ENCODE measurements at regions of chr11 and their contacts with region 1.

Region 1: DNA sequence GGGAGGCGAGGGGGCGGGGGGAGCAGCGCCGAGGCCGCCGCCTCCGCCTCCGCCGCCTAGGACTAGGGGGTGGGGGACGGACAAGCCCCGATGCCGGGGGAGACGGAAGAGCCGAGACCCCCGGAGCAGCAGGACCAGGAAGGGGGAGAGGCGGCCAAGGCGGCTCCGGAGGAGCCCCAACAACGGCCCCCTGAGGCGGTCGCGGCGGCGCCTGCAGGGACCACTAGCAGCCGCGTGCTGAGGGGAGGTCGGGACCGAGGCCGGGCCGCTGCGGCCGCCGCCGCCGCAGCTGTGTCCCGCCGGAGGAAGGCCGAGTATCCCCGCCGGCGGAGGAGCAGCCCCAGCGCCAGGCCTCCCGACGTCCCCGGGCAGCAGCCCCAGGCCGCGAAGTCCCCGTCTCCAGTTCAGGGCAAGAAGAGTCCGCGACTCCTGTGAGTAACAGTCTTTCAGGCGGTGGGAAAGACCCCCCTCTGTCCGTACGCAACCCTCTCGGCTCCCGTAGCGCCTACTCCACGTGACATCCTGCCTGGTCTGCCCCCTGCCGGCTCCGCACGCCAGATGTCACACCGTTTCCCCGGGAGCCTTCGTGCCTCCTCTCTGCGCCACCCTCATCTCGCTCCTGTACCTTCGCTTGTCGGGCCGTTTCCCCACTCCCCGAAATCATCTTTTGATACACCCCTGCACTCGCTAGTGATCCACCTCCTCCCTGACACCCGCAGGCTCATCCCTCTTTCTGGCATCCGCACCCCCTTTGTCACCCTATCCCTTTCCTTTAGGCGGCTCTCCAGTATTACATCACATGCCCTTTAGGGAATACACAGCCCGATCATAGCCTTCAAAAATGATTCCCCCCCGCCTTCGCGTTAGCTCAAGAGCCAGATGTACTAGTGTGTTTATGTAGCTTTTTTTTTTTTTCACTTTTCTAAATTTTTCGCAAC is 598 bp downstream of the ZFP91 start:
- DNase-seq: peak; percentile 77 to 96
- H3K4me3 ChIP-seq: peak overlapping the region; percentile 94 to 97
- H3K27ac ChIP-seq: peak overlapping the region; percentile 98 to 99
- H3K4me1 ChIP-seq: peaks cover 0 to 32% of the 10 kb centered on the region in 2 donors
- H3K27me3 ChIP-seq: no peaks in the 10 kb centered on the region
- CTCF ChIP-seq: peak; percentile 65 to 94 (median 73)

Region 2: DNA sequence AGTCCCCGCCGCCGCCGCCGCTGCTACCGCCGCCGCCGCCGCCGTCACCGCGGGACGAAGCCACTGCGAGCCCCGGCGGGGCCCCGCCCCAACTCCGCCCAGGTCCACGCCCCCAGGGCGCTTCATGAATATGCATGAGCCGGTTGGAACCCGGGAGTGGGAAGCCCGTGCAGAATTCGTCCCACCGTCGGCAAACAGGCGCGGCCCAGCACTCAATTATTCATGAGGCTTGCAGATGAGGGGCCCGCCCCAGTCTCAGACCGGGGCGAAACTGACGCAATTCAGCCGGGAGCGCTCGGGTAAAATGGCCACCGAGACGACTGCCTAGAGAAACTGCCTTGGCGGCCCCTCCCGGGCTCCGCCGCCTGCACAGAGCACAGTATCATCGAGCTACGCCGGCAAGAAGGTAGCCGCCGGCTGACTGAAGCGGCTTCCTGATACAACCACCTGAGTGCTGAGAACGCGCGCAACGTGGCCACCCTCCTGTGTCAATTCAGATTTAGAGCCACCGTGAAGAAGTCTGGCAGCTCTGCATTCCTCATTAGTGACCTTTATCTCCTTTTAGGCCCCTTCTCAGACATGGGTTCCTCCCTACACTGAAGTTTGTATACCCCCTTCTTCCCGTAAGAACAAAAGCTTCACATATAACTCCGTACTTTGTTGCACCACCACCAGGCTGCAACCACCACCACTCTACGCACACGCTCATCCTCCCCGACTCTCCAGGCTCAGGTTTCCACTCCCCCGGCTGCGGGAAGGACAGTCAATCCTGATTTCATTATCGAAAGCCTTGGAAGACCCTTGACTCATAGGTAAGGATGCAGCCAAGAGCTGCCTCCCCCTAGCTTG is 1254.4 kb before region 1 on chr11 and contains the start of gene TNKS1BP1:
- intact Hi-C with region 1: loop called (anchors 1 kb)
- DNase-seq: peak; percentile 97 to 99
- H3K4me3 ChIP-seq: peak within 1 kb of the TSS; percentile 90 to 94
- H3K27ac ChIP-seq: peak within 1 kb of the TSS; percentile 94 to 98
- H3K4me1 ChIP-seq: peaks cover 8 to 28% of the 10 kb centered on the region in 2 donors
- H3K27me3 ChIP-seq: no peaks in the 10 kb centered on the region
- CTCF ChIP-seq: no peak
- total RNA-seq, gene TNKS1BP1: 131 TPM

Region 3: DNA sequence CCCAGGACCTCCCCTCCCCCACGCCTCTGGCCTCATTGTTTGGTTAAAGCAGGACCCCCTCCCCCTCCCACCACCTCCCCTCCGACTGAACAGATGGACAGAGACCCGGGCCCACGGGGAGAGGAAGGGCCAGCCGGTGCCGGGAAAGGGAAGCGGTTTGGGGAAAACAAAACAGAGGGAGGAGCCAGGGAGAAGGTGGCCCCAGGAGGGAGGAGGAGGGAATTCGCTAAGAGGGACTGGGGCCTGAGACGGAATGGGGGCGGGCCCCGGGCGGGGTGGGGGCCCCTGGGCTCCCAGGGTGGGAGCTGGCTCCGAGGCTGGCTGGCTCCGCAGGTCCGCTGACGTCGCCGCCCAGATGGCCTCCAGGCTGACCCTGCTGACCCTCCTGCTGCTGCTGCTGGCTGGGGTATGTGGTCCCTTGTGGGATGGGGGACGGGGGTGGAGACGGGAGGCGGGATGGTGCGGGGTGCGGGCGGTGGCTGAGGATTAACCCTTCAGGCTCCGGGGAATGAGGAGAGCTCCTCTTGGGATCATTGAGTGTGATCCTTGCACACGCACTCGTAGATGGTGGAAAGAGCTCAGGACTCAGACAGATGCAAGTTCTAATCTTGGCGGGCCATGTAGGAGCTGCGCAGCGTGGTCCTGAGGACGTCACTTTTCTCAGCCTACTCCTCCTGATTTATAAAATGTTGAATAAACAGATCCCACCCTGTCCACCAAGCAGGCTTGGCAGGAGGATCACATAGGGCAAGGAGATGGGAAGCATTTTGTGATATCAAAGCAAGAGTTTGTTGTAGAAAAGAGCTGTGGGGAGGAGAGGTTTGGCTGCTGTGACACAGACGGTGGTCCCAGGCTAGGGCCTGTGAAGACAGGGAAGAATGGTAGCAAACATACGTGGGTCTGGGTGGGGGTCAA is 981.3 kb before region 1 on chr11:
- intact Hi-C with region 1: loop called (anchors 5 kb)
- DNase-seq: peak; percentile 42 to 89
- H3K4me3 ChIP-seq: peak overlapping the region; percentile 72
- H3K27ac ChIP-seq: peak overlapping the region; percentile 95 to 97
- H3K4me1 ChIP-seq: peaks cover 0 to 9% of the 10 kb centered on the region in 2 donors
- H3K27me3 ChIP-seq: no peaks in the 10 kb centered on the region
- CTCF ChIP-seq: no peak

Region 4: DNA sequence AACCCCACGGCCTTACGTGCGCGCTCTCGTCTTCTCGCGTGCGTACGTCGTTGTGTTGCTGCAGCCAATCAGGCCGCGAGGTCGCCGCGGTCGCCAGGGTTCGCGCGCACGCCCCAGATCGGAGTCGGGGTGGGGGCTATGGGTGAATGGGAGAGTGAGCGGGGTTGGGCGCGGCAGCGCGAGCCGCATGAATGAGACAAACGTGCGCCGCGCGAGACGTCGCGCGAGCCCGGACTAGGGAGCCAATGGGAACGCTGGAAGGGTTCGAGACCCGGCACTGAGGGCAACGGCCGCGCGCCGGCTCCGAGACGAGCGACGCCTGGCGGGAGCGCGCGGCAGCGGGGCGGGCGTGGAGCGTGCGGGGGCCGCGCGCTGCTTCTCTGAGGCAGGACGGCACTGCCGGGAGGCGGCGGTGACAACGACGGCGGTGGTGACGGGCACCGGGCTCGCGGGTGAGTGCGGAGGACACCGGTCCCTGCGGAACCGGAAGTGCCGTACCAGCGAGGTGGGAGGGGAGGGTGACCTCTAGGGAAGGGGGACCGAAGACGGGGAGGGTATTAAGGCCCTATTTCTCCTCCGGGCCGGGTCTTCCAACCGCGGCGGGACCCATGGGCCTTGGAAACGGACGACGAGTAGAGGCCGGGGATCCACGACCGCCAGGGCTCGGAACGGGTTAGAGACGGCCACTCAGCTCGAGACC is 911.6 kb before region 1 on chr11 and contains the start of gene ZDHHC5:
- intact Hi-C with region 1: loop called (anchors 1 kb)
- DNase-seq: peak; percentile 98 to 100
- H3K4me3 ChIP-seq: peak within 1 kb of the TSS; percentile 90 to 96
- H3K27ac ChIP-seq: peak within 1 kb of the TSS; percentile 98
- H3K4me1 ChIP-seq: peaks cover 6 to 16% of the 10 kb centered on the region in 2 donors
- H3K27me3 ChIP-seq: no peaks in the 10 kb centered on the region
- CTCF ChIP-seq: peak; percentile 33 to 69 (median 34)
- total RNA-seq, gene ZDHHC5: 26.2 TPM

Region 5: GRCh38 chr11:57761301-57762234 is 817.9 kb before region 1 on chr11 and contains the start of gene CTNND1:
- intact Hi-C with region 1: loop called (anchors 5 kb)
- DNase-seq: peak; percentile 68 to 95
- H3K4me3 ChIP-seq: peak within 1 kb of the TSS; percentile 66 to 79
- H3K27ac ChIP-seq: peak within 1 kb of the TSS; percentile 87 to 96
- H3K4me1 ChIP-seq: peaks cover 0 to 21% of the 10 kb centered on the region in 2 donors
- H3K27me3 ChIP-seq: no peaks in the 10 kb centered on the region
- CTCF ChIP-seq: no peak
- total RNA-seq, gene CTNND1: 69.5 TPM

Region 6: GRCh38 chr11:59142530-59143507 is 563.4 kb after region 1 on chr11 and contains the start of gene FAM111A:
- intact Hi-C with region 1: loop called (anchors 5 kb)
- DNase-seq: peak; percentile 70 to 93
- H3K4me3 ChIP-seq: peak within 1 kb of the TSS; percentile 79 to 90
- H3K27ac ChIP-seq: peak within 1 kb of the TSS; percentile 95 to 96
- H3K4me1 ChIP-seq: peaks cover 0 to 9% of the 10 kb centered on the region in 2 donors
- H3K27me3 ChIP-seq: no peaks in the 10 kb centered on the region
- CTCF ChIP-seq: peak in 1 of 3 experiments; percentile 18
- total RNA-seq, gene FAM111A: 54.3 TPM

Region 7: DNA sequence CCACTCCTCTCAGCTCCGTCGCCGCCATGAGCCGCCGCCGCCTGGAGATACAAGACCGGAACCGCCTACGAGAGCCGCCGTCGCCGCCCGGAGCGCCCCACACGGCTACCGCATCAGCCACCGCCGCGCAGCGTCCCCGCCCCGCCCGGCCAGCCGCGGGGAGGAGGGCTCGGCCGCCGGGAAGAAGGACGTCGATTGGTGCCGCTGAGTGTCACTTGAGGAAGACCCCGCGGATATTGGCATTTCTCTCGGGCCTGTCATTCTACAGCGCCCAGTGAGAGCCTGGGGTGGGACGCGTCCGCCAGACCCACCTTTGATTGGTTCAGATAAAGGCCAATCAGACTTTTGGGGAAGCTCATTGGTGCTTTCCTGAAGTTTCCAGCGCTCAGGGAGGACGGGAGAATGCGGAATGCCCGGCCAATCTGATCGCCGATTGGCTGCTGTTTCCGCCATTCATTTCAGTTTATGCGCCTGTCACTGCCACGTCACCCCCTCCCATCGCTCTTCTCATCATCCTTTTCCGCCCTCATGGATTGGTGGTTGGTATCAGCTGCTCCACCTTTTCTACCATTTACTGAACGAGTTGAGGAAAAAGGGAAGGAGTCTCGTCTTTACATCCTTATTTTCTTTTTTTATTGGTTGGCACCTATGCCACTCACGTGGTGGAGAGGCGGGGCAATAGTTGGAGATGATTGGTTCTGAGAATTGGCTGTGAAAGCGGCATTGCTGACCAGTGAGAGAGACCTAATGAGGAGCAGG is 1036.4 kb after region 1 on chr11 and contains the start of gene OSBP:
- intact Hi-C with region 1: loop called (anchors 5 kb)
- DNase-seq: peak; percentile 99 to 100
- H3K4me3 ChIP-seq: peak within 1 kb of the TSS; percentile 53 to 79
- H3K27ac ChIP-seq: peak within 1 kb of the TSS; percentile 92
- H3K4me1 ChIP-seq: peaks cover 3 to 19% of the 10 kb centered on the region in 2 donors
- H3K27me3 ChIP-seq: no peaks in the 10 kb centered on the region
- CTCF ChIP-seq: peak in 1 of 3 experiments; percentile 2
- total RNA-seq, gene OSBP: 16.7 TPM